Panc1 (cell line): ENCODE measurements at regions of chr9 and their contacts with region 1.

Region 1: GRCh38 chr9:111986035-111986556 is 89.5 kb downstream of the UGCG start:
- DNase-seq: no peak
- ATAC-seq: no peak
- H3K4me3 ChIP-seq: no peak overlapping the region
- H3K27ac ChIP-seq: peak overlapping the region; percentile 46; the same call in 1 of the 2 replicates
- H3K4me1 ChIP-seq: no peaks in the 10 kb centered on the region
- H3K27me3 ChIP-seq: no peaks in the 10 kb centered on the region
- CTCF ChIP-seq: no peak

Region 2: DNA sequence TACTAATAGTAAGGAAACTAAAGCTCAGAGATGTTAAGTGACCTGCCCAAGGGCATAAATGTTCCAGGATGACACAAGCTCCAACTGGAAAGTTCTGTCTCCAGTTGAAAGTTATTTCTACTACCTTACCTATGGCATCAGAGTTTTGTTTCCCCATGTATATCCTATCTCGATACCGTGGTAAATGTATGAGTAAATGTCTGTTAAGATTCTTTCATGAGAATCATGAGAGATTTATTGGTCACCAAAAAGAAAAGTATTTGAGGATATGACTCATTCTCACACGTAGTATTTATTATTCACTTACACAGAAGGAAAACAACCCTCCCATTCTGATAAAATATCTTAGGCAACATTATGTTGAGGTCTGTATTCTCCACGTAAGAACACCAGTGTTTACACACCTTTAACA is 180.3 kb before region 1 on chr9:
- CTCF ChIA-PET with region 1: no interaction called
- POLR2A ChIA-PET with region 1: interaction called, 10 read pairs
- in situ Hi-C with region 1: no loop called
- intact Hi-C with region 1: no loop called
- DNase-seq: peak; percentile 55
- ATAC-seq: peak; percentile 84
- H3K4me3 ChIP-seq: no peak overlapping the region
- H3K27ac ChIP-seq: peak overlapping the region; percentile 13; the same call in 1 of the 2 replicates
- H3K4me1 ChIP-seq: no peaks in the 10 kb centered on the region
- H3K27me3 ChIP-seq: no peaks in the 10 kb centered on the region
- CTCF ChIP-seq: no peak

Region 3: GRCh38 chr9:111891910-111892499 is 94.1 kb before region 1 on chr9:
- CTCF ChIA-PET with region 1: no interaction called
- POLR2A ChIA-PET with region 1: no interaction called
- in situ Hi-C with region 1: no loop called
- intact Hi-C with region 1: no loop called
- DNase-seq: no peak
- ATAC-seq: no peak
- H3K4me3 ChIP-seq: no peak overlapping the region
- H3K27ac ChIP-seq: peak overlapping the region; percentile 52; the same call in 1 of the 2 replicates
- H3K4me1 ChIP-seq: peaks cover 11% of the 10 kb centered on the region
- H3K27me3 ChIP-seq: no peaks in the 10 kb centered on the region
- CTCF ChIP-seq: no peak

Region 4: GRCh38 chr9:112097712-112098688 is 111.9 kb after region 1 on chr9:
- CTCF ChIA-PET with region 1: no interaction called
- POLR2A ChIA-PET with region 1: interaction called, 14 read pairs
- in situ Hi-C with region 1: no loop called
- intact Hi-C with region 1: no loop called
- DNase-seq: peak; percentile 38
- ATAC-seq: peak; percentile 95
- H3K4me3 ChIP-seq: no peak overlapping the region
- H3K27ac ChIP-seq: no peak overlapping the region
- H3K4me1 ChIP-seq: no peaks in the 10 kb centered on the region
- H3K27me3 ChIP-seq: no peaks in the 10 kb centered on the region
- CTCF ChIP-seq: peak; percentile 89